ENCODE measurements at regions of chr3 and their contacts with region 1.

Region 1: DNA sequence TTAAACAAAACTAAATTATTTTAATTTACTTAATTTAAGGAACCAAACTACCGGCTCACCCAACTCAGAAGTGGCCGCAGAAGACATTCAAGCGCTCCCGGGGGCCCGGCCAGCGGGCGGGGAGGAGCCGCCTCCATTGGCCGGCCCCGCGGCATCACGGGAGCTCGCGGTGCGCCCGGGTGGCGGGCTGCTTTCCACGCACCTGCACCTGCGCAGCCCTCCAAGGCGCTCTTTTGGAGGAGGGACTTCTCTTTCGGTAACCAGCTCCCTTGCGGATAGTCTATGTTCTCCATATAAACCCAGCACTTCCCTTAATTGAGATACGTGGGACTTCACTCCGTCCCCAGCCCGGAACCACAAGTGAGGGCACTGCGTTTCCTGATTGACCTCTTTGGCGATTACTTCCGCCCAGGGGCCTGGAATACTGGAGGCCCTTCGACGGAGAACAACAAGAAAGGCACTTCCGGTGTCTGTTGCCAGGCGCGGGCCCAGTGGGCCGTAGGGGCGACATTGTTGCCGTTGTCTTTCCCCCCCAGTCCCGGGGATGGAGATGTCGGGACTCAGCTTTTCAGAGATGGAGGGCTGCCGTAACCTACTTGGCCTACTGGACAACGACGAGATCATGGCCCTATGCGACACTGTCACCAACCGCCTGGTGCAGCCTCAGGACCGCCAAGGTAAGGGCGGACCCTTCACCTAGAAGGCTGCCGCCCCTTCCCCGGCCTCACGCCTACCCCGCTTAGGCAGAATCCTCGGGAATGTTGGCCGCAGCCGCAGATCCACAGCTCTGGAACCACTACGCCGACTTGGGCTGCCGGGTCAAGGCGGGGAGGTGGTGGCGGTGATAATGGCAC is at the start of gene C3orf38:
- DNase-seq: peak; percentile 94
- H3K4me3 ChIP-seq: peak within 1 kb of the TSS; percentile 74 to 93 (median 90)
- H3K27ac ChIP-seq: peak within 1 kb of the TSS; percentile 90 to 96 (median 94)
- H3K4me1 ChIP-seq: peaks cover 0 to 32% (median 24%) of the 10 kb centered on the region in 4 donors
- H3K27me3 ChIP-seq: no peaks in the 10 kb centered on the region
- CTCF ChIP-seq: no peak
- EP300 ChIP-seq: peak in 1 of 4 donors; percentile 4
- POLR2A ChIP-seq: peak; percentile 43 to 44
- total RNA-seq, gene C3orf38: 16.6 to 19.3 (median 17.3) TPM

Region 2: GRCh38 chr3:88058591-88059368 is 91.0 kb before region 1 on chr3 and contains the starts of genes CGGBP1 and ZNF654:
- intact Hi-C with region 1: loop called (anchors 1 kb)
- DNase-seq: peak; percentile 99
- H3K4me3 ChIP-seq: peak within 1 kb of the TSS; percentile 73 to 97 (median 95)
- H3K27ac ChIP-seq: peak within 1 kb of the TSS; percentile 95 to 98 (median 96)
- H3K4me1 ChIP-seq: peaks cover 0 to 44% (median 29%) of the 10 kb centered on the region in 4 donors
- H3K27me3 ChIP-seq: no peaks in the 10 kb centered on the region
- CTCF ChIP-seq: no peak
- EP300 ChIP-seq: no peak
- POLR2A ChIP-seq: peak; percentile 82 to 87
- total RNA-seq, gene CGGBP1: 62.2 to 80.6 (median 73.9) TPM
- total RNA-seq, gene ZNF654: 17.8 to 20.2 (median 19.4) TPM

Measured in sigmoid colon (tissue), 7 donors.